Vagina (tissue), 2 donors: ENCODE measurements at regions of chr13 and their contacts with region 1.

Region 1: GRCh38 chr13:98495627-98496478 is 81.1 kb downstream of the STK24 start:
- DNase-seq: no peak
- H3K4me3 ChIP-seq: peak overlapping the region; percentile 6 to 14
- H3K27ac ChIP-seq: peak overlapping the region; percentile 85
- H3K4me1 ChIP-seq: peaks cover 91% of the 10 kb centered on the region
- H3K27me3 ChIP-seq: no peaks in the 10 kb centered on the region
- CTCF ChIP-seq: no peak
- POLR2A ChIP-seq: no peak

Region 2: DNA sequence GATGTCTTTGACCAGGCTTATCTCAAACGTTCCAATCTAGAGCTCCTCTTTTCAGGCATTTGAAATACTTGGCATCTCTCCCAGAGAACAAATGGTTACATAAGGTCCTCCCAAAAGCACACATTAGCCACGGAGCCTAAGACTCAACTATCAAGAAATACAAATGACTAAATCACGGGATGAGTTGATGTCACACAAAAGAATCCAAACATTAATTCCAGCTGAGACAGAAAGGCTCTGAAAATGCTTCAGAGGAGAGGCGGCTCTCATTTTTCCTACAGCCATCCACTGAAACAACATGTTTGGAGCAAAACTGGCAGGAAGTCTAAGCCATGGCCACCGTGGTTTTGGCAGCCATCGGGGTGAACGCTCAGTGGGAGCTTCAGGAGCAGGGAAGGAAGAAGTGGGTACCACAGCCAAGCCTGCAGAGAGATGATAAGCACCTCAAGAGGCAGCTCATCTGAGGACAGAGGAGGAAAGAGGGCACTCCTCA is 41.4 kb before region 1 on chr13:
- intact Hi-C with region 1: loop called (anchors 5 kb)
- DNase-seq: no peak
- H3K4me3 ChIP-seq: no peak overlapping the region
- H3K27ac ChIP-seq: peak overlapping the region; percentile 83
- H3K4me1 ChIP-seq: peaks cover 62% of the 10 kb centered on the region
- H3K27me3 ChIP-seq: no peaks in the 10 kb centered on the region
- CTCF ChIP-seq: no peak
- POLR2A ChIP-seq: no peak

Region 3: GRCh38 chr13:100483841-100484381 is 1988.1 kb after region 1 on chr13:
- intact Hi-C with region 1: no loop called
- DNase-seq: no peak
- H3K4me3 ChIP-seq: no peak overlapping the region
- H3K27ac ChIP-seq: no peak overlapping the region
- H3K4me1 ChIP-seq: no peaks in the 10 kb centered on the region
- H3K27me3 ChIP-seq: no peaks in the 10 kb centered on the region
- CTCF ChIP-seq: no peak
- POLR2A ChIP-seq: no peak